ENCODE measurements at regions of chr11 and their contacts with region 1.

Region 1: DNA sequence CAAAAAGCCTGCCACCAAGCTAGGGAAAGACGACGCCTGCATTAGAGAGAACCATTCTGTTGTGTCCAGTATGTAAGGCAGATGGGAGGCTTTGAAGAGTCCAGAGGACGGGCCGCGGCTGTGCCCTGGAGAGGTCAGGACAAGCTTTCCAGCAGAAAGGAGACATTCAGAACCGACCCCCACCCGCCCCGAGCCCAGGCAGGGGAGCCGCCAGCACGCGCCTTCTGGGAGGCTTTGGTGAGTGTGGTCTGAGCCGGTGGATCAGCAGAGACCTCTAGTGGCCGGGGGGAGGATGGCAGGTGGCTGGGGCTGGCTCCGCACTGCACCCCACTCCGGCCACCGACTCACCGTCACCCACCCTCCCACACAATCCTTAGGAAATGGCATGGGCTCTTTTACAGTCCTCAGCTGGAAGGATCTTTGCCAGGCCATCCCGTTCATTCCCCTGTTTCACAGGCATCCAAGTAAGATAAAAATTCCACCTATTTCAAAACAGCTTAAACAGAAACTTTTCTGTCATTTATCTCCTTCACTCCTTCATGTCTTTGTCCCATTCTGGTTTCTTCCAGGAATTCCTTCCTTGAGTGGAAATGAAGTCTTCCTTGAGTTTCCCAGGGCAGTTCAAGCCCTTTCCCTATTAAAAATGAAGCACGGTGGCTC is 91.2 kb downstream of the FEZ1 start:
- DNase-seq: peak; percentile 27
- H3K4me3 ChIP-seq: no peak overlapping the region
- H3K27ac ChIP-seq: no peak overlapping the region
- H3K4me1 ChIP-seq: peaks cover 11% of the 10 kb centered on the region
- H3K27me3 ChIP-seq: no peaks in the 10 kb centered on the region
- CTCF ChIP-seq: peak; percentile 81 to 96

Region 2: GRCh38 chr11:124953753-124954589 is 450.9 kb before region 1 on chr11 and contains the start of gene CCDC15:
- CTCF ChIA-PET with region 1: no interaction called
- dilution Hi-C with region 1: no loop called
- in situ Hi-C with region 1: loop called in 1 of 2 experiments (anchors 25 kb)
- intact Hi-C with region 1: no loop called
- DNase-seq: peak; percentile 97
- H3K4me3 ChIP-seq: peak within 1 kb of the TSS; percentile 63 to 65 (median 64)
- H3K27ac ChIP-seq: peak within 1 kb of the TSS; percentile 77
- H3K4me1 ChIP-seq: peaks cover 9% of the 10 kb centered on the region
- H3K27me3 ChIP-seq: no peaks in the 10 kb centered on the region
- CTCF ChIP-seq: no peak
- total RNA-seq, gene CCDC15: 2.3 to 5.4 TPM

Region 3: GRCh38 chr11:124961972-124962609 is 442.8 kb before region 1 on chr11:
- CTCF ChIA-PET with region 1: no interaction called
- dilution Hi-C with region 1: no loop called
- in situ Hi-C with region 1: loop called in 1 of 2 experiments (anchors 25 kb)
- intact Hi-C with region 1: loop called (anchors 1 kb)
- DNase-seq: peak; percentile 67
- H3K4me3 ChIP-seq: no peak overlapping the region
- H3K27ac ChIP-seq: no peak overlapping the region
- H3K4me1 ChIP-seq: no peaks in the 10 kb centered on the region
- H3K27me3 ChIP-seq: no peaks in the 10 kb centered on the region
- CTCF ChIP-seq: peak; percentile 73 to 76

Region 4: GRCh38 chr11:125164422-125165110 is 240.3 kb before region 1 on chr11 and contains the start of gene PKNOX2:
- CTCF ChIA-PET with region 1: no interaction called
- dilution Hi-C with region 1: no loop called
- in situ Hi-C with region 1: loop called in 1 of 2 experiments (anchors 25 kb)
- intact Hi-C with region 1: loop called (anchors 1 kb)
- DNase-seq: peak; percentile 47
- H3K4me3 ChIP-seq: peak within 1 kb of the TSS; percentile 56 to 69 (median 59)
- H3K27ac ChIP-seq: no peak within 1 kb of the TSS
- H3K4me1 ChIP-seq: peaks cover 12% of the 10 kb centered on the region
- H3K27me3 ChIP-seq: peaks cover 11% of the 10 kb centered on the region
- CTCF ChIP-seq: peak; percentile 28 to 70
- total RNA-seq, gene PKNOX2: 0.16 to 0.33 TPM

Region 5: DNA sequence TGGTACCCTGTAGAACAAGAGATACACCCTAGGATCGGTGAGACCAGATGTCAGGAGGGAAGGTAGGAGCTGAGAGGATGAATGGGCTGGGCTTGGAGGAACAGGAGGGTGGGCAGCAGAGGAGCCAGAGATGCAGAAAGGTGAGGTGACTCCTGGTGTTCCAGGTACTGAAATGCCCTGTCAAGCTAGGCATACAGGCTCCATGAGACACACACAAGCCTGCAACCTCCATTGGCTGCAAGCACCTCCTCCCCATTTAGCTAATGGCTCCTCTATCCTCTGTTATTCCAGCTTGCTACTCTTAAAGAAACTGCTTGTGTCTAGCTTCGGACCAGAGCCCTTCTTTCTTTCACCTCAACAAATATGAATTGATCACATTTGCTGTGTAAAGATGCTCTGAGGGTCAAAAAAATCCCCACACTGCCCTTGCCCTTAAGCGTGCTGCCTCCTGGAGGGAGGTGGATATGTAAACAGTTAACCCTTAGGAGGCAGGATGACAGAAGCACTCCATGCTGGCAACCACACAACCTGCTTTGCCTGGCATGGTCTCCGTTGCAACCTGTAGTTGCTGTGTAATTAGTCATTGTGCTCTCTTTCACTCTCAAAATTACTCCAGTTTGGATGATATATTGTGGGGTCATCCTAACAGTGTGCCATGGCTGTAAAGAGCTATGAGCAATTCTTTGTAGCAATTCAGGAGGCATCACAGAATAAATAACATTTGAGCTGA is 84.4 kb before region 1 on chr11:
- CTCF ChIA-PET with region 1: no interaction called
- dilution Hi-C with region 1: no loop called
- in situ Hi-C with region 1: no loop called
- intact Hi-C with region 1: no loop called
- DNase-seq: no peak
- H3K4me3 ChIP-seq: no peak overlapping the region
- H3K27ac ChIP-seq: no peak overlapping the region
- H3K4me1 ChIP-seq: no peaks in the 10 kb centered on the region
- H3K27me3 ChIP-seq: no peaks in the 10 kb centered on the region
- CTCF ChIP-seq: no peak

Region 6: DNA sequence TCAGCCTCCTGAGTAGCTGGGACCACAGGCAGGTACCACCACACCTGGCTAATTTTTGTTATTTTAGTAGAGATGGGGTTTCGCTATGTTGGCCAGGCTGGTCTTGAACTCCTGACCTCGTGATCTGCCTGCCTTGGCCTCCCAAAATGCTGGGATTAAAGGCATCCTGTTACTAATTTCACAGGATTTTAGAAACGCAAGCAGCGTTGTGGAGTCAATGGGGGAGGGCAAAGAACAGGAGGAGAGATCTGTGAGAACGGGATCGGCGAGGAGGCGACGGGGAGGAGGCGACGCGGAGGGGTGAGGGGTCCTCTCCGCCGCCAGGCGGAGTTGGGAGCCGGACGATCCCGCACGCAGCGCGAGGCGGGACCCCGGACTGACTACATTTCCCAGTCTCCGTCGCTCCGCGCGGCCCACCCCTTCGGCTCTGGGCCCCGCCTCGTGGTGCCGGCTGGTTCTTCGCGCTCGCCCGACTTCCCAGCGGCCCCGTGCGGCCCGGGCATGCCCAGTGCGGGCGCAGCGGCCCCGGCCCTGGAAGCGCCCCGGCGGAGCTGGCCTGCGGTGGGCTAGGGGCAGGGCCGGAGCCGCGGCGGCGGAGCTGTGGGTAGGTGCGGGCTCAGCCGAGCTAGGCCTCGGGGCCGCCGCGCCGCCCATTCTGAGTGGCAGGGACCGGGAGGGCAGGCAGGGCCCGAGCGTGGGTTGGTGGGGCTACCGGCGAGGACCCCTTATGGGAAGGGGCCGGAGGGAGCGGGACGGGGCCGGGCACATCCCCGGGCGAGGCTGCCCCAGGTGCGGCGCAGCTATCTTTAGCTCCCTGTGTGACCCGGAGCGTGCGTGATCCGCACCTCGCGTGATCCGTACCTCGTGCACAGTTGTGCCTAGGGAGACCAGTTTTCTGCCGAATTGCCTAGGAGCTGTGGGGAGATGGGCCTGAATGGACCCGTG is 164.3 kb after region 1 on chr11 and contains the start of gene EI24:
- CTCF ChIA-PET with region 1: no interaction called
- dilution Hi-C with region 1: no loop called
- in situ Hi-C with region 1: no loop called
- intact Hi-C with region 1: no loop called
- DNase-seq: peak; percentile 90
- H3K4me3 ChIP-seq: peak within 1 kb of the TSS; percentile 57 to 82 (median 77)
- H3K27ac ChIP-seq: peak within 1 kb of the TSS; percentile 78
- H3K4me1 ChIP-seq: peaks cover 9% of the 10 kb centered on the region
- H3K27me3 ChIP-seq: no peaks in the 10 kb centered on the region
- CTCF ChIP-seq: peak; percentile 40 to 78
- total RNA-seq, gene EI24: 127 to 162 TPM

Measured in mammary epithelial cell (primary cell).